A673 (cell line): ENCODE measurements at regions of chr2 and their contacts with region 1.

Region 1: GRCh38 chr2:65366595-65367125 is 65.7 kb downstream of the SPRED2 start:
- DNase-seq: peak; percentile 93
- H3K4me3 ChIP-seq: peak overlapping the region; percentile 8
- H3K27ac ChIP-seq: peak overlapping the region; percentile 69
- H3K4me1 ChIP-seq: peaks cover 65% of the 10 kb centered on the region
- H3K27me3 ChIP-seq: no peaks in the 10 kb centered on the region
- CTCF ChIP-seq: no peak

Region 2: GRCh38 chr2:65350684-65351083 is 16.0 kb before region 1 on chr2:
- CTCF ChIA-PET with region 1: no interaction called
- POLR2A ChIA-PET with region 1: no interaction called
- intact Hi-C with region 1: loop called (anchors 2 kb)
- DNase-seq: peak; percentile 60
- H3K4me3 ChIP-seq: peak overlapping the region; percentile 8
- H3K27ac ChIP-seq: peak overlapping the region; percentile 59
- H3K4me1 ChIP-seq: peaks cover 55% of the 10 kb centered on the region
- H3K27me3 ChIP-seq: no peaks in the 10 kb centered on the region
- CTCF ChIP-seq: peak; percentile 45; the same call in 1 of the 2 replicates

Region 3: GRCh38 chr2:65390134-65390533 is 23.5 kb after region 1 on chr2:
- CTCF ChIA-PET with region 1: no interaction called
- POLR2A ChIA-PET with region 1: interaction called, 25 read pairs
- intact Hi-C with region 1: no loop called
- DNase-seq: no peak
- H3K4me3 ChIP-seq: no peak overlapping the region
- H3K27ac ChIP-seq: no peak overlapping the region
- H3K4me1 ChIP-seq: peaks cover 30% of the 10 kb centered on the region
- H3K27me3 ChIP-seq: no peaks in the 10 kb centered on the region
- CTCF ChIP-seq: no peak

Region 4: GRCh38 chr2:65432227-65433190 is 65.8 kb after region 1 on chr2 and contains the start of gene SPRED2:
- CTCF ChIA-PET with region 1: no interaction called
- POLR2A ChIA-PET with region 1: no interaction called
- intact Hi-C with region 1: loop called (anchors 5 kb)
- DNase-seq: peak; percentile 99
- H3K4me3 ChIP-seq: peak within 1 kb of the TSS; percentile 97
- H3K27ac ChIP-seq: peak within 1 kb of the TSS; percentile 96
- H3K4me1 ChIP-seq: peaks cover 20% of the 10 kb centered on the region
- H3K27me3 ChIP-seq: no peaks in the 10 kb centered on the region
- CTCF ChIP-seq: no peak
- total RNA-seq, gene SPRED2: 79.4 and 81.0 TPM in 2 replicates